A673 (cell line): ENCODE measurements at regions of chr3 and their contacts with region 1.

Region 1: DNA sequence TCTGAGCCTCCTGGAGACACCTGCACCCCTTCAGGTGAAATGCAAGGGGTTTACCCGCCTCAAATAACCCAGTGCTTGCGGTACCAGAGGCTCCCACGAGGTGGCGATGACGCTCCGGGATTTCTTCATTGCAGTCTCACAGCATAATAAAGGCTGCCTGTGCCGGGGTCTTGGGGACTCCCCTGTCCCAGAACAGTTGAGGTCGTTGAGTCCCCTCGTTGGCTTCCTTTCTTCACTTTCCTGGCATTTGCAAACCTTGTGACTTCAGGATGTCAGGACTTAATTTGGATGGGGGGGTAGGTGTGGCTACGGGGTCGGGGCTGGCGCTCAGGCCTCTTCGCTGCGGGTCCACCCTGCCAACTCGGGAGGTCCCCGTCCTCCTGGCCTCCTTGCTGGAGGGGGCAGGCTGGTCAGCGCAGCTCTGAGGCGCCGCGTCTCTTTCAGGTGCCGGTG is 1.3 kb downstream of the GNAT1 start:
- DNase-seq: peak; percentile 63
- H3K4me3 ChIP-seq: no peak overlapping the region
- H3K27ac ChIP-seq: no peak overlapping the region
- H3K4me1 ChIP-seq: no peaks in the 10 kb centered on the region
- H3K27me3 ChIP-seq: peaks cover 15% of the 10 kb centered on the region
- CTCF ChIP-seq: peak; percentile 74

Region 2: DNA sequence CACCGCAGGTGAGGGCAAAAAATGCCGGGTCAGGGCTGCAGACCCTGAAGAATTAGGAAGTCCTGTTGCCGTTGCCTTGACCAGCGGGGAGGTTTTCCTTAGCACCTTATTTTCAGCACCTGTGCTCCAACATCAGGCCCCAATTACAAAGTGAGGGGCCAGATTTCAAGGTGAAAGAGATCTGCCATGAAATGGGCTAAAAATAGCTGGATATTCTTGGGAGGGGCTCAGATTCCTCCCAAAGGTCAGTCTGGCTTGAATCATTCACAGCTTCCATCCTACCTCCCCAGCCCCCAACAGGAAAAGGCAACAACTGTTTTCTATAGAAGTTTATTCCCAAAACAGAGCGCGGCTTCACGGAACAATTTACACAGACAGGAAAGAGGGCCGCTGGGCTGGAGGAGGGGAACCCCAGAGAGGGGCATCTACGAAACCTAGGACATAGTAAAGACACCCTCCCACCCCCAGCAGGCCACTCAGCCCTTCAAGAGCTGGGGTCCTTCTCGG is 1556.5 kb before region 1 on chr3:
- CTCF ChIA-PET with region 1: no interaction called
- POLR2A ChIA-PET with region 1: no interaction called
- intact Hi-C with region 1: no loop called
- DNase-seq: no peak
- H3K4me3 ChIP-seq: peak overlapping the region; percentile 70
- H3K27ac ChIP-seq: peak overlapping the region; percentile 47
- H3K4me1 ChIP-seq: no peaks in the 10 kb centered on the region
- H3K27me3 ChIP-seq: no peaks in the 10 kb centered on the region
- CTCF ChIP-seq: no peak

Region 3: GRCh38 chr3:50121416-50122032 is 71.2 kb before region 1 on chr3:
- CTCF ChIA-PET with region 1: interaction called, 4 read pairs
- POLR2A ChIA-PET with region 1: no interaction called
- intact Hi-C with region 1: loop called (anchors 1 kb)
- DNase-seq: peak; percentile 72
- H3K4me3 ChIP-seq: no peak overlapping the region
- H3K27ac ChIP-seq: no peak overlapping the region
- H3K4me1 ChIP-seq: peaks cover 5% of the 10 kb centered on the region
- H3K27me3 ChIP-seq: no peaks in the 10 kb centered on the region
- CTCF ChIP-seq: peak; percentile 68

Region 4: DNA sequence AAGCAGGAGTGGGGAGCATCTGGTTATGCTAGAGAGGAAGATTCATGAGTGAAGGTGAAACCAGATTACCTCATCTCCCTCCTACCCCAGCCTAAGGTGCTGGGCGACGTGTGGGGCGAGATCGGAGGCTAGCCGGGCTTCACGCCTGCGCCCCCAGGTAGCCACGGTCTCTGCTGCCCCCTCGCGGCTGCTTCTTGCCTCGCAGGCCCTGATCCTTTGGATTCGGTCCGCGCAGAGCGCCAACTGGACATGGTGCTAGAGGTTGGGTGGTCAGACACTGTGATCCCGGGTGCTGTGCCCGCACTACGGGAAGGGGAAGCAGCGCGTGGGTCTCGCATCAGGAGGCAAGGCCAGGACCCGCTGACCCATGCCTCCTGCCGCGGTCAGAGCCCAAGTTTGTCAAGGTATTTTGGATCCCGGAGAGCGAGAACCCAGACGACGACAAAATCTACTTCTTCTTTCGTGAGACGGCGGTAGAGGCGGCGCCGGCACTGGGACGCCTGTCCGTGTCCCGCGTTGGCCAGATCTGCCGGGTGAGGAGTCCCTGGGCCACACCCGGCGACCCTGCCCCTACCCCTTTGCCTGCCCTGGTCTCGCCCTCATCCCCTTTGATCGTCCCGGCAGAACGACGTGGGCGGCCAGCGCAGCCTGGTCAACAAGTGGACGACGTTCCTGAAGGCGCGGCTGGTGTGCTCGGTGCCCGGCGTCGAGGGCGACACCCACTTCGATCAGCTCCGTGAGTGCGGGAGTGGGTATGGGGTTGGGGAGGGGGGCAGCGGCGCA is 80.4 kb after region 1 on chr3:
- CTCF ChIA-PET with region 1: no interaction called
- POLR2A ChIA-PET with region 1: no interaction called
- intact Hi-C with region 1: loop called (anchors 1 kb)
- DNase-seq: peak; percentile 59
- H3K4me3 ChIP-seq: peak overlapping the region; percentile 25
- H3K27ac ChIP-seq: no peak overlapping the region
- H3K4me1 ChIP-seq: no peaks in the 10 kb centered on the region
- H3K27me3 ChIP-seq: peaks cover 4% of the 10 kb centered on the region
- CTCF ChIP-seq: peak; percentile 82